ENCODE measurements at regions of chr2 and their contacts with region 1.

Region 1: GRCh38 chr2:82527124-82527523 is 1932.0 kb downstream of the SUCLG1 start:
- DNase-seq: no peak
- H3K4me3 Mint-ChIP-seq: no peak overlapping the region
- H3K27ac Mint-ChIP-seq: peak overlapping the region; percentile 25
- H3K4me1 Mint-ChIP-seq: no peaks in the 10 kb centered on the region
- H3K27me3 Mint-ChIP-seq: no peaks in the 10 kb centered on the region

Region 2: GRCh38 chr2:82109418-82109817 is 417.7 kb before region 1 on chr2:
- CTCF ChIA-PET with region 1: no interaction called
- intact Hi-C with region 1: no loop called
- DNase-seq: no peak
- H3K4me3 Mint-ChIP-seq: no peak overlapping the region
- H3K27ac Mint-ChIP-seq: no peak overlapping the region
- H3K4me1 Mint-ChIP-seq: no peaks in the 10 kb centered on the region
- H3K27me3 Mint-ChIP-seq: no peaks in the 10 kb centered on the region

Region 3: DNA sequence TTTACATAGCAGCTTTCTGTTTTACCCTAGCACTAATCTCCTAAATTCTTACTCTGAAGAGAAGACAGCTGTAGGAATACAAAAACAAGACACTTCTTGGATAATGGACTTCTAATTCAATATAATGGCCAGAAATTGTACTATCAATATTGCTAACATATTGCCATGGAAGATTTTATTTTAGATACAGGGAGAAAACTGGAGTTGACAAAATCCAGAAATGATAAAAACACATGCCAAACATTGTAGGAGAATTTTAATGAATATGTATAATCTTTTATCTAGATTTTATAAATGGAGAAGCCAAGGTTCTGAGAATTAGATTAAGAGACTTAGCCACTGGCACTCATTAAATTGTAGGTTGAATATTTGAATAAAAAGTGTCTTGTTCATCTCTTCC is 383.8 kb before region 1 on chr2:
- CTCF ChIA-PET with region 1: no interaction called
- intact Hi-C with region 1: no loop called
- DNase-seq: no peak
- H3K4me3 Mint-ChIP-seq: no peak overlapping the region
- H3K27ac Mint-ChIP-seq: no peak overlapping the region
- H3K4me1 Mint-ChIP-seq: no peaks in the 10 kb centered on the region
- H3K27me3 Mint-ChIP-seq: no peaks in the 10 kb centered on the region

Region 4: DNA sequence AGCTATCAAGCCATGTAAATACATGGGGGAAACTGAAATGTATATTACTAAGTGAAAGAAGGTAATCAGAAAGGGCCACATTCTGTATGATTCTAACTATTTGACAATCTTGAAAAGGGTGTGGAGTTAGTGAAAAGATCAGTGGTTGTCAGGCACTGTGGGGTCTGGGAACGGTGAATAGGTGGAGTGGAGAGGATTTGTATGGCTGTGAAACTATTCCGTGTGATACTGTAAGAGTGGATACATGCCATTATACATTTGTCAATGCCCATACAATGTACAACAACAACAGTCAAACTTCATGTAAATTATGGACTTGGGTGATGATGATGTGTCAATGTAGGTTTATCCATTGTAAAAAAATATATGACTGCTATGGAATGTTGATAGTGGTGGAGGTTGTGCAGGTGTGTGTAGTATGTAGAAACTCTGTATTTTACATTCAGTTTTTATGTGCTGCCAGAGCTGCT is 815.8 kb after region 1 on chr2:
- CTCF ChIA-PET with region 1: no interaction called
- intact Hi-C with region 1: loop called (anchors 5 kb)
- DNase-seq: no peak
- H3K4me3 Mint-ChIP-seq: no peak overlapping the region
- H3K27ac Mint-ChIP-seq: no peak overlapping the region
- H3K4me1 Mint-ChIP-seq: no peaks in the 10 kb centered on the region
- H3K27me3 Mint-ChIP-seq: no peaks in the 10 kb centered on the region

Measured in activated naive CD4-positive, alpha-beta T cell treated with anti-CD3 and anti-CD28 coated beads for 36 hours (primary cell).